ENCODE measurements at regions of chr3 and their contacts with region 1.

Region 1: DNA sequence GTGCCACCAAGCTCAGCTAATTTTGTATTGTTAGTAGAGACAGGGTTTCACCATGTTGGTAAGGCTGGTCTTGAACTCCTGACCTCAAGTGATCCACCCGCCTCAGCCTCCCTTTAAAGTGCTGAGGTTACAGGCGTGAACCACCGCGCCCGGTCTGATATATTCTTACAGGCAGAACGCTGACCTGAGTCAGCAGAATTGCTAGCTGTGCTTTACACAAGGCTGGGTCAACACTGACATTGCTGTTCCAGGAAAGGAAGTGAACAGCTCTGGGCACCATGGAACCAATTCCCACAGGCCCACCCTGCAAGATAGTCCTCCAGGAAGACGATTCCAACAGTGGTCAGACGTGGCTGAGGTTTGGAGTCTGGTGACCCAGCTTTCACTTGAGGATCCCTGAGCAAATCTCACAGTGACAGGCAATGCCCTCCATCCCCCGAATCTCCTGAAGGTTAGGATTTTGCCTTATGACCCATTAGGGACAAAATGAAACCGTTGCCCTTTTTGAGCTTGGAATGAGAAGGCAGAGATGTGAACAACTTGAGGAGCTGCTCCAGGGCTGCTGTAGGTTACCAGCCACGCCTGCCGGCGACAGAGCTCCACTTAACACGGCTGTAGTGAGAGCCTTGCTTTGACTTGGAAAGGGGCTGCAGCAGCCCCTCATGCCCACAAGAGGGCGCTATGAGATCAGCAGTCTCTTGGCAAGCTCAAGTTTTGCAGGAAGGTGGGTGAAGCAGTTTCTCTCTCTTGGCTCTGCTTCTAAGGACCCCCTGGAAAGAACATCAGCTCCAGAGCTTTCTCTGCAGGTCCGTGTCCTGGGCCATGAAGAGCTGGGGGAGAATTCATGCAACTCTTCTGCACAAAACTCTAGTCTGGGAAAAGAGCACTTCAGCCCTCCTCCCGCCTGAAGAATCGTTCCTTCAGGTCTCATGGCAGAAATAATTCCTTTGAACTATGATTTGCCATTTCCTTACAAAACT is 74.1 kb downstream of the SENP2 start:
- DNase-seq: peak; percentile 88
- ATAC-seq: peak; percentile 90
- H3K4me3 Mint-ChIP-seq: no peak overlapping the region
- H3K27ac Mint-ChIP-seq: no peak overlapping the region; the same call in 1 of the 2 replicates
- H3K4me1 Mint-ChIP-seq: peaks cover 12% of the 10 kb centered on the region
- H3K27me3 Mint-ChIP-seq: no peaks in the 10 kb centered on the region; the same call in 1 of the 2 replicates
- CTCF ChIP-seq: peak; percentile 99

Region 2: DNA sequence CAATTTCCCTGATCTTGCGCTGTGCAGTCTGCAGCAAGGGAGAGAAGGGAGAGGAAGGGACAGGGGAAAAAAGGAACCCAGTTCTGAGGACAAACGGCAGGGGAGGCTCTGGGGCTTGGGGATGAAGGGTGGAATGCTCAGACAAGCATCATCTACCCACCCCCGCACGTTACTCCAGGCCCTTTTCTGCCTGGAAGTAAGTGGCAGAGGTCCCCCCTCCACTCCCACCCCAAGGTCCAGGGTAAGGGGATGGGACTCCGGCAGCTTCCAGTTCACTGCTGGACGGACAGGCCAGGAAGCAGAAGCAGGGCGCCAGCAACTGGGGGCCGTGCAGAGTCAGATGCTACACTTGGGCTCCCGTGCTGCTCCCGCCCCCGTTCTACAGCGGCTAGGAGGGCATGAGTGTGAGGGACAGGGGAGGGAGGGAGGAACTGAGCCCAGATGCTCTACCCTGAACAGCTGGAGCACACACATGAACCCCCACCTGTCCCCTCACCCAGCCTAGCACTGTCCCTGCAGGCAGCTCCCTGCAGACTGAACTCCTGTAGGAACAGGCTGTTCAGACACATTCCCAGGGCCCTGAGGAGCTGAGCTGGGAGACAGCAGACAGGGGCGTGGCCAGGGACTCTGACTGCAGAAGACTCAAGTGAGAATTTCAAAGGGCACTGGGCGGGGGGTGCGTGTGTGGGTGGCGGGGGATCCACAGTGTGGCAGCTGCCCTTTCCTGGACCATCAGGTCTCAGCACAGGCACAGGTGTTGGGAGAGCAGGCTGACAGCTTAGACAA is 14.4 kb before region 1 on chr3:
- CTCF ChIA-PET with region 1: interaction called, 40 read pairs
- POLR2A ChIA-PET with region 1: no interaction called
- DNase-seq: peak; percentile 43
- ATAC-seq: peak; percentile 60
- H3K4me3 Mint-ChIP-seq: no peak overlapping the region
- H3K27ac Mint-ChIP-seq: peak overlapping the region; percentile 90
- H3K4me1 Mint-ChIP-seq: peaks cover 34% of the 10 kb centered on the region
- H3K27me3 Mint-ChIP-seq: no peaks in the 10 kb centered on the region; the same call in 1 of the 2 replicates
- CTCF ChIP-seq: no peak

Region 3: DNA sequence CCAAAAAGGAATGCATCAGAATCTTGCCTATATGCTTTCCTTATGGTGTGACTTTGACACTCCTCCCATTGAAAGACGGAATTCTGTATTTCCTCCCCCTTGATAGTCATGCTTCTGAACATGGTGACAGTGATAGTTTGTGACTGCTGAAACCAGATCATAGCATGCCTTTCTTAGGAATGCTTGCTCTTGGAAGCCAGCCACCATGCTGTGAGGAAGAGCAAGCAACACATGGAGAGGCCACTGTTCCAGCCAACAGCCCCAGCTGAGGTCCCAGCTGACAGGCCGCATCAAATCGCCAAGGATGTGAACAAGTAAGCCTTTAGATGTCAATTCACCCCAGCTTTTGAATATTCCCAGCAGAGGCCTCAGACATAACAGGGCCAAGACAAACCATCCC is 64.5 kb after region 1 on chr3:
- CTCF ChIA-PET with region 1: interaction called, 13 read pairs
- POLR2A ChIA-PET with region 1: no interaction called
- DNase-seq: peak; percentile 31
- ATAC-seq: peak; percentile 20
- H3K4me3 Mint-ChIP-seq: no peak overlapping the region
- H3K27ac Mint-ChIP-seq: peak overlapping the region; percentile 5
- H3K4me1 Mint-ChIP-seq: peaks cover 87% of the 10 kb centered on the region
- H3K27me3 Mint-ChIP-seq: no peaks in the 10 kb centered on the region
- CTCF ChIP-seq: no peak

Region 4: DNA sequence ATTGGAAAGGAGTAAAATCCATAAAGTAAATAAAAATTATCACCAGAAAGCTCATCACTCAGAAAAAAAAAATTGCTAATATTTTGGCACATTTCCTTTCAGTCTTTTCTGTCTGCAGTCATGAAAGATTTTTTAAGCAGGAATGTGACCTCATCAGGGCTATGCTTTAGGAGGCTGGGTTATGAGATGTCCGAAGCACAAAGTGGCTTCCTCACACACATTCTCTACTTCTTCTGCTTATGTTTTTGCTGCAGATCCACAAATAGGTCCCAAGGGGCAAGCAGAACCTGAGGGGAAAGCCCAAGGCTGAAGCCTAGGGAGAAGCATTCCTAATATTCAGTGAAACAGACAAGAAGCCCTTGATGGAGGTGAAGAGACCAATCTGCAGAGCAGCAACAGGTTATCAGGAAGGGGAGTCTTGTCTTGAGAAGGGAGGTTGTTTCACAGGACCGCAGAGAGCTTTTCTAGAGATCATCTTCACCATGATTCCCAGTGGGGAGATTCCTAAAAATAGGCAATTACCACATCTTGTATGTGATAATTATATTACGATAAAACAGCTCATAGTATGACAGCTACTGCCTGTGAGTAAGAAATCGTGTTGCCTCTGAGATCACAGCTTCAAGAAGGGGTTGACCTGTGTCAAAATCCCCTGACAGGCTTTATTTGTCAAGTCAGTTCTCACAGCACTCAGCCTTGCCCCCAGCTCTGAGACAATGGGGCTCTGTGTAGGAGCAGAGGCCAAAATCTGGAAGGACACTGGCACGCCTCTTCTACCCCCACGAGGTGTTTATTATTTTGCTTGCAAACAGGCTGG is 104.1 kb after region 1 on chr3:
- CTCF ChIA-PET with region 1: interaction called, 34 read pairs
- POLR2A ChIA-PET with region 1: no interaction called
- DNase-seq: no peak
- ATAC-seq: no peak
- H3K4me3 Mint-ChIP-seq: no peak overlapping the region
- H3K27ac Mint-ChIP-seq: peak overlapping the region; percentile 17
- H3K4me1 Mint-ChIP-seq: peaks cover 80% of the 10 kb centered on the region
- H3K27me3 Mint-ChIP-seq: no peaks in the 10 kb centered on the region
- CTCF ChIP-seq: no peak

Region 5: DNA sequence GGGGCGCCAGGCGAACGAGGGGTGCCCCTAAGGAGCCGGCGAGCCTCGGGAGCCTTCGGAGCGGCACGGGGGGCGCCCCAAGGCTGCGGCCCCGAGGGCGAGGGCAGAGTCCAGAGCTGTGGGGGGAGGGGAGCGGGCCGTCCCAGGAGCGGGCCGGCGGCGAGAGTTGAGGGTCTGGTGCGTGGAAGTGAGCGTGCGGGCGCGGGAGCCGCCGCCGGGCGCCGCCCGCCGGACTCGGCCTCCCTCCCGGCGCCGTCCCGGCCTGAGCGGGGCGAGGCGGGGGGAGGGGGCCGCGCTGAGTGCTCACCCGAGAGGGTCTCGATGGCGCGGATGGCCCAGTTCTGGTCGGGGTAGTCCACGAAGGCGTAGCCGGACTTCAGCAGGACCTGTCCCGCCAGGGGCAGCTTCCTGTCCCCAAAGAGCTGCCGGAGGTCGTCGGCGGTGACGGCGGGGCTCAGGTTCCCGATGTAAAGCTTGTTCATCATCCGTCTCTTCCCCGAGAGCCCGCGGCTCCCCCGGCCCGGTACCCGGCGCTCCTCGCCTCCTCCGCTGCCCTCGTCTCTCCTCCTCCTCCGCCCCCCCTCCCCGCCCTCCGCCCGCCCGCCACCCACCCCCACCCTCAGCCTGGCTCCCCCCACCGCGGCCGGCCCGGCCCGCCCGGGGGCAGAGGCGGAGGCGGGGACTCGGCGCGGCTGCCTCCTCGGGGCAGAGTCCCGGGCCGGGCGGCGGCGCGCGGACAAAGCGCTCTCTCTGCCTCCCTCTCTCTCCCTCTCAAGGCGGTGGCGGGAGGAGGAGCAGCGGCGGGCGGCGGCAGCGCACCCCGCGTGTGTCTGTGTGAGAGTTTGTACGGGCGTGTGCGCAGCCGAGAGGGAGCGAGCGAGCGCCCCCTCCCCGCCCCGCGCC is 164.5 kb after region 1 on chr3 and contains the start of gene IGF2BP2:
- CTCF ChIA-PET with region 1: interaction called, 27 read pairs
- POLR2A ChIA-PET with region 1: no interaction called
- DNase-seq: peak; percentile 81
- ATAC-seq: peak; percentile 63
- H3K4me3 Mint-ChIP-seq: peak within 1 kb of the TSS; percentile 89
- H3K27ac Mint-ChIP-seq: peak within 1 kb of the TSS; percentile 88
- H3K4me1 Mint-ChIP-seq: peaks cover 42% of the 10 kb centered on the region
- H3K27me3 Mint-ChIP-seq: peaks cover 16% of the 10 kb centered on the region
- CTCF ChIP-seq: no peak
- total RNA-seq, gene IGF2BP2: 133 to 157 TPM (median 150 TPM) in 3 replicates

Region 6: GRCh38 chr3:185900226-185900625 is 240.0 kb after region 1 on chr3:
- CTCF ChIA-PET with region 1: interaction called, 12 read pairs
- POLR2A ChIA-PET with region 1: no interaction called
- DNase-seq: no peak
- ATAC-seq: no peak
- H3K4me3 Mint-ChIP-seq: no peak overlapping the region
- H3K27ac Mint-ChIP-seq: no peak overlapping the region
- H3K4me1 Mint-ChIP-seq: peaks cover 4% of the 10 kb centered on the region; the same call in 1 of the 2 replicates
- H3K27me3 Mint-ChIP-seq: no peaks in the 10 kb centered on the region
- CTCF ChIP-seq: no peak